ENCODE measurements at regions of chr14 and their contacts with region 1.

Region 1: GRCh38 chr14:58072288-58073071 is 79.5 kb downstream of the ARMH4 start:
- DNase-seq: no peak
- H3K4me3 ChIP-seq: peak overlapping the region in 1 of 2 donors; percentile 42
- H3K27ac ChIP-seq: no peak overlapping the region
- H3K4me1 ChIP-seq: peaks cover 2 to 8% of the 10 kb centered on the region in 2 donors
- H3K27me3 ChIP-seq: no peaks in the 10 kb centered on the region
- CTCF ChIP-seq: peak; percentile 56 to 81 (median 76)

Region 2: GRCh38 chr14:57486767-57487379 is 585.6 kb before region 1 on chr14:
- intact Hi-C with region 1: loop called (anchors 2 kb)
- DNase-seq: no peak
- H3K4me3 ChIP-seq: no peak overlapping the region
- H3K27ac ChIP-seq: no peak overlapping the region
- H3K4me1 ChIP-seq: no peaks in the 10 kb centered on the region
- H3K27me3 ChIP-seq: no peaks in the 10 kb centered on the region
- CTCF ChIP-seq: peak; percentile 24 to 56 (median 25)

Region 3: GRCh38 chr14:57533214-57533613 is 539.3 kb before region 1 on chr14:
- intact Hi-C with region 1: loop called (anchors 1 kb)
- DNase-seq: no peak
- H3K4me3 ChIP-seq: no peak overlapping the region
- H3K27ac ChIP-seq: no peak overlapping the region
- H3K4me1 ChIP-seq: no peaks in the 10 kb centered on the region
- H3K27me3 ChIP-seq: no peaks in the 10 kb centered on the region
- CTCF ChIP-seq: peak; percentile 7 to 51 (median 20)